IMR-90 (cell line): ENCODE measurements at regions of chr14 and their contacts with region 1.

Region 1: DNA sequence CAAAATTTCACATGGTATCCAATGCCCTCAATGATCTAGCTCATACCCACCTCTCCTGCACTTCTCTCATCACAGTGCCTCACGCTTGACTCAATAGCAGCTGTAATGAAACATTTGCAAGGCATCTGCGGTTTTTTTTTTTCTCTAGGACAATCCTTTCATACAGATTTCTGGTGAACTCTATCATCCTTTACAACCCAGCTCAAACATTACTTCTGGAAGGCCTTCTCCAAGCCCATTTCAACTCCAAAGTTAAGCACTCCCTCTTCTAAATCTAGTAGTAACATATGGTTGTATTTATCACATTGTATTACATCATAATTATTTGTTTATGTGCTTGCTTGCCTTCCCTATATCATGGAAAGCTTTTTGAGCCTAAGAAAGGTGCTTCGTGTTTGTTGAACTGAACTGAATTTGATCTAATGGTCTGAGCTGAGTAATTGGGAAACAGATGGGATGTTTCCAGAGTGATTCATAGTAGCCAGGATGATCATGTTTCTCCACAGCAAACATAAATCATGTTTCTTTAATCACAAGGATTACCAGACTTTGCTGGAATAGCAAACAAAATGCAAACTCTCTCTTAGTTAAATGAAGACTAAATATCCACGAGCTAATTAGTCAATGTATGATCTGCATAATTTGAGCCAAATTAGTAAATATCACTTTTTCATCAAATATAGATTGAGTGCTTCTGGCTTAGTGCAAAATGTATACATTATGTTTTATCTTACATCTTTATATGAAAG is 14.3 kb downstream of the CFL2 start:
- DNase-seq: peak; percentile 93
- ATAC-seq: peak; percentile 85
- H3K4me3 ChIP-seq: no peak overlapping the region
- H3K27ac ChIP-seq: peak overlapping the region; percentile 18; the same call in 1 of the 2 replicates
- H3K4me1 ChIP-seq: peaks cover 2% of the 10 kb centered on the region
- H3K27me3 ChIP-seq: no peaks in the 10 kb centered on the region
- CTCF ChIP-seq: no peak
- POLR2A ChIP-seq: no peak
- RAD21 ChIP-seq: no peak

Region 2: DNA sequence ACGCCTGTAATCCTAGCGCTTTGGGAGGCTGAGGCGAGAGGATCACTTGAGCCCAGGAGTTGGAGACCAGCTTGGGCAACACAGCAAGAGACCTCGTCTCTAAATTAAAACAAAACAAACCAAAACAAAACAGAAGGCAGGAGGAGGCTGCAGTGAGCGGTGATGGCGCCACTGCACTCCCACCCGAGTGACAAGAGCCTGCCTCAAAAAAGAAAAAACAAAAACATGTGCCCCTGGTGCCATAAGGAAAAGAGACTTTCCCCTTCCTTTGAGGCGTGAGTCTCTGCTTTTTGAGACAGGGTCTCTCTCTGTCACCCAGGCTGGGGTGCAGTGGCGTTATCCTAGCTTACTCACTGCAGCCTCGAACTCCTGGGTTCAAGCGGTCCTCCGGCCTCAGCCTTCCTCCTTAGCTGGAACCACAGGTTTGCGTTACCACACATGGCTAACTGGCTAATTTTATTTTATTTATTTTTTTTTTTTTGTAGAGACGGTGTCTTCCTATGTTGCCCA is 151.5 kb before region 1 on chr14:
- CTCF ChIA-PET with region 1: no interaction called
- POLR2A ChIA-PET with region 1: interaction called, 11 read pairs
- dilution Hi-C with region 1: no loop called
- in situ Hi-C with region 1: no loop called
- intact Hi-C with region 1: no loop called
- DNase-seq: no peak
- ATAC-seq: no peak
- H3K4me3 ChIP-seq: no peak overlapping the region
- H3K27ac ChIP-seq: no peak overlapping the region
- H3K4me1 ChIP-seq: peaks cover 2% of the 10 kb centered on the region
- H3K27me3 ChIP-seq: no peaks in the 10 kb centered on the region
- CTCF ChIP-seq: no peak
- POLR2A ChIP-seq: peak; percentile 25; the same call in 1 of the 2 replicates
- RAD21 ChIP-seq: no peak

Region 3: DNA sequence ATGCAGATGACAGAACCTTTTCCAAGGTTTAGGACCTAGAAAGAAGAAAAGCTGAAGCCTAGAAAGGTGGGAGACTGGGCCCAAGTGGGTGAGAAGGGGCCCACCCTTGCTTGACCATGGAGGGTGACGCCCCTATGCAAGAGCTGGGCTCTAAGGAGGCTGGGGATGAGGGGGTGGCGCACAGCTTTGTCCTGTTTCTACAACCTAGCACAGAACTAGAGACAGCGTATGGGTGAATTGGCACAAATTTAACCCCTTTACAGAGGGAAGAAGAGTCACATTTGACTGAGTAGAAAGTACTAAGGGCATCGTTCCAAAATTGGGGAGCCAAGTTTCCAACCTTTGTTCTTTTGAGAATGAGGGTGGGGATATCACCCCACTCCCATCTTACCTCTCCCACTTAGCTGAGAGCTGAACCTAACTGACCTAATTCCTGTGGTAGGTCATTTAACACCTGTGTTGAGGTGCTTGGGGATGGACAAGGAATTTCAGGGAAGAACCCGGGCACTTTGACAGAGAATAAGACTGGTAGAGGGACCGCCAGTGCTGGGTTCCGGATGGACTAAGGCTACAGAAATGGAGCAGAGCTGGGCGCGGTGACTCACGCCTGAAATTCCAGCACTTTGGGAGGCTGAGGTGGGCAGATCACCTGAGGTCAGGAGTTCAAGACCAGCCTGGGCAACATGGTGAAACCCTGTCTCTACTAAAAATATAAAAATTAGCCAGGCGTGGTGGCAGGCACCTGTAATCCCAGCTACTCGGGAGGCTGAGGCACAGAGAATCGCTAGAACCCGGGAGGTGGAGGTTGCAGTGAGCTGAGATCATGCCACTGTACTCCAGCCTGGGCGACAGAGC is 699.3 kb after region 1 on chr14:
- CTCF ChIA-PET with region 1: no interaction called
- POLR2A ChIA-PET with region 1: interaction called, 11 read pairs
- dilution Hi-C with region 1: no loop called
- in situ Hi-C with region 1: no loop called
- intact Hi-C with region 1: no loop called
- DNase-seq: no peak
- ATAC-seq: no peak
- H3K4me3 ChIP-seq: no peak overlapping the region
- H3K27ac ChIP-seq: no peak overlapping the region
- H3K4me1 ChIP-seq: peaks cover 11% of the 10 kb centered on the region
- H3K27me3 ChIP-seq: no peaks in the 10 kb centered on the region
- CTCF ChIP-seq: no peak
- POLR2A ChIP-seq: 0 out of 2 replicates have a peak, but pooled peaks have one; percentile 4
- RAD21 ChIP-seq: no peak

Region 4: GRCh38 chr14:35506927-35507326 is 806.9 kb after region 1 on chr14:
- CTCF ChIA-PET with region 1: no interaction called
- POLR2A ChIA-PET with region 1: no interaction called
- dilution Hi-C with region 1: no loop called
- in situ Hi-C with region 1: no loop called
- intact Hi-C with region 1: no loop called
- DNase-seq: peak; percentile 76
- ATAC-seq: peak; percentile 84
- H3K4me3 ChIP-seq: no peak overlapping the region
- H3K27ac ChIP-seq: no peak overlapping the region
- H3K4me1 ChIP-seq: no peaks in the 10 kb centered on the region; the same call in 1 of the 2 replicates
- H3K27me3 ChIP-seq: no peaks in the 10 kb centered on the region; the same call in 1 of the 2 replicates
- CTCF ChIP-seq: no peak
- POLR2A ChIP-seq: no peak
- RAD21 ChIP-seq: no peak